RWPE1 (cell line): ENCODE measurements at regions of chr17 and their contacts with region 1.

Region 1: GRCh38 chr17:2786176-2786881 is 9.9 kb upstream of the RAP1GAP2 start:
- DNase-seq: peak; percentile 85
- H3K27ac ChIP-seq: no peak overlapping the region; the same call in 1 of the 2 replicates
- CTCF ChIP-seq: peak; percentile 87

Region 2: DNA sequence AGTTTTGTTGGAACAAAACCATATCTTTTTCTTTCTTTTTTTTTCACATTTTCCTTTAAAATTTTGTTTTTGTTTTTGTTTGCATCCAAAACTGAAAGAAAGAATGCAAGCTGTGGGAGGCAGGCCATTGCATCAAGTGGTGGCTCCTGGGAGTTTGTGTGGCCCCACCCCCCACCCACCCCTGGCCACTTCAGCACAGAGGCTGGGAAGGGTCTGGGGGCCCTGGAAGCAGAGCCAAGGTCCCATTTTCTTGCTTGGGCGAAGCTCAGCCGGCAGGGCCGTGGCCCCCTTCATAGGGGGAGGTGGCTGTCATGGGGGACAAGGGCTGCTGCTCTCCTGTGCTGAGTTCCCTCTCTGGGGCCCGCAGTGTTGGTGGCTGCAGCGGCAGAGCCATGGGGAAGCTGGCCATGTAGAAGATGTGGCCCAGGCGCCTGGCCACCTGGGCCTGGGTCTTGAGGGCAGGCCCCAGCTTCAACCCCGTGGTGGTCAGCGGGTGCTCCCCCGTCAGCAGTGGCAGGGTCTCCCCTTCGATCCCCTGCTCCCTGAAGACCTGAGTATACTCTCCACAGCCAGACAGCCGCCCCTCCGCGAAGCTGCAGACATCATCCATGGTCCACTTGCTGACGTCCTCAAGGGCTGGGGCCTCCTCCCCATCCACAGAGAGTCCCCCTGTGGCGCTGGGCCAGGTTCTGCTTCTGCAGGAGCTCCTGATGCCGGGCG is 173.1 kb before region 1 on chr17:
- CTCF ChIA-PET with region 1: no interaction called
- POLR2A ChIA-PET with region 1: no interaction called
- DNase-seq: no peak
- H3K27ac ChIP-seq: no peak overlapping the region
- CTCF ChIP-seq: no peak

Region 3: GRCh38 chr17:2814481-2815341 is 28.4 kb after region 1 on chr17:
- CTCF ChIA-PET with region 1: no interaction called
- POLR2A ChIA-PET with region 1: interaction called, 10 read pairs
- DNase-seq: no peak
- H3K27ac ChIP-seq: no peak overlapping the region
- CTCF ChIP-seq: no peak

Region 4: GRCh38 chr17:2837147-2837561 is 50.8 kb after region 1 on chr17:
- CTCF ChIA-PET with region 1: no interaction called
- POLR2A ChIA-PET with region 1: no interaction called
- DNase-seq: no peak
- H3K27ac ChIP-seq: no peak overlapping the region
- CTCF ChIP-seq: no peak